CD8-positive, alpha-beta T cell (primary cell): ENCODE measurements at regions of chr7 and their contacts with region 1.

Region 1: GRCh38 chr7:127347567-127348246 is 44.8 kb downstream of the ZNF800 start:
- DNase-seq: peak; percentile 45 to 88 (median 71)
- ATAC-seq: peak; percentile 98
- H3K4me3 ChIP-seq: peak overlapping the region; percentile 26 to 34
- H3K4me3 Mint-ChIP-seq: peak overlapping the region; percentile 72
- H3K27ac ChIP-seq: no peak overlapping the region
- H3K27ac Mint-ChIP-seq: no peak overlapping the region
- H3K4me1 ChIP-seq: peaks cover 3% of the 10 kb centered on the region
- H3K4me1 Mint-ChIP-seq: peaks cover 22% of the 10 kb centered on the region
- H3K27me3 ChIP-seq: no peaks in the 10 kb centered on the region
- H3K27me3 Mint-ChIP-seq: no peaks in the 10 kb centered on the region
- CTCF ChIP-seq: peak; percentile 43

Region 2: DNA sequence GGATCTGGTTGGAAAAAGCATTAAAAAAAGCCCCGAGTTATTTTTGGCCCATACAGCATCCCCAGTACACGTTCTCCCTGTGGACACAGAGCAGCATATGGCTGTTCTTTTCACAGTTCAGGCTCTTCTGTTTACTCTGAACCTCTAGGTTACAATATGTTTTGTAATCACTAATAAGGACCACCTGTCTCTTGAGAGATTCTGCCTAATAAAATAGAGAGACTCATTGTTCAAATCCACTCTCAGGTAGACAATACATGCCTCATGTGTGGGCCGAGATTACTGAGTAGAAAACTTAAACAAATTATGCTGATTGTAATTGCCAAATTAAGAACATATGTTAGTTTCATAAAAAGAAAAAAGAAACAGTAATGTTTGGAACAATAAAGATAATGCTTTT is 742.7 kb before region 1 on chr7:
- CTCF ChIA-PET with region 1: no interaction called
- POLR2A ChIA-PET with region 1: no interaction called
- intact Hi-C with region 1: no loop called
- DNase-seq: no peak
- ATAC-seq: no peak
- H3K4me3 ChIP-seq: no peak overlapping the region
- H3K4me3 Mint-ChIP-seq: no peak overlapping the region
- H3K27ac ChIP-seq: no peak overlapping the region
- H3K27ac Mint-ChIP-seq: no peak overlapping the region
- H3K4me1 ChIP-seq: no peaks in the 10 kb centered on the region
- H3K4me1 Mint-ChIP-seq: no peaks in the 10 kb centered on the region
- H3K27me3 ChIP-seq: no peaks in the 10 kb centered on the region
- H3K27me3 Mint-ChIP-seq: no peaks in the 10 kb centered on the region
- CTCF ChIP-seq: no peak

Region 3: GRCh38 chr7:127359011-127359410 is 11.3 kb after region 1 on chr7:
- CTCF ChIA-PET with region 1: interaction called, 9 read pairs
- POLR2A ChIA-PET with region 1: interaction called, 3 read pairs
- intact Hi-C with region 1: loop called in 1 of 2 experiments (anchors 2 kb)
- DNase-seq: no peak
- ATAC-seq: no peak
- H3K4me3 ChIP-seq: no peak overlapping the region
- H3K4me3 Mint-ChIP-seq: no peak overlapping the region
- H3K27ac ChIP-seq: no peak overlapping the region
- H3K27ac Mint-ChIP-seq: peak overlapping the region; percentile 47
- H3K4me1 ChIP-seq: no peaks in the 10 kb centered on the region
- H3K4me1 Mint-ChIP-seq: peaks cover 21% of the 10 kb centered on the region
- H3K27me3 ChIP-seq: no peaks in the 10 kb centered on the region
- H3K27me3 Mint-ChIP-seq: no peaks in the 10 kb centered on the region
- CTCF ChIP-seq: no peak

Region 4: GRCh38 chr7:127404286-127405072 is 56.8 kb after region 1 on chr7:
- CTCF ChIA-PET with region 1: interaction called, 5 read pairs
- POLR2A ChIA-PET with region 1: no interaction called
- intact Hi-C with region 1: loop called in 1 of 2 experiments (anchors 5 kb)
- DNase-seq: peak in 2 of 9 experiments; percentile 15 to 56
- ATAC-seq: peak; percentile 77
- H3K4me3 ChIP-seq: no peak overlapping the region
- H3K4me3 Mint-ChIP-seq: peak overlapping the region; percentile 20
- H3K27ac ChIP-seq: peak overlapping the region; percentile 3 to 21
- H3K27ac Mint-ChIP-seq: peak overlapping the region; percentile 84
- H3K4me1 ChIP-seq: peaks cover 28% of the 10 kb centered on the region
- H3K4me1 Mint-ChIP-seq: peaks cover 30% of the 10 kb centered on the region
- H3K27me3 ChIP-seq: no peaks in the 10 kb centered on the region
- H3K27me3 Mint-ChIP-seq: no peaks in the 10 kb centered on the region
- CTCF ChIP-seq: no peak

Region 5: GRCh38 chr7:127514499-127514898 is 166.8 kb after region 1 on chr7:
- CTCF ChIA-PET with region 1: interaction called, 21 read pairs
- POLR2A ChIA-PET with region 1: interaction called, 3 read pairs
- intact Hi-C with region 1: loop called in 1 of 2 experiments (anchors 1 kb)
- DNase-seq: peak in 3 of 9 experiments; percentile 5 to 70 (median 55)
- ATAC-seq: peak; percentile 57
- H3K4me3 ChIP-seq: no peak overlapping the region
- H3K4me3 Mint-ChIP-seq: no peak overlapping the region
- H3K27ac ChIP-seq: no peak overlapping the region
- H3K27ac Mint-ChIP-seq: no peak overlapping the region
- H3K4me1 ChIP-seq: no peaks in the 10 kb centered on the region
- H3K4me1 Mint-ChIP-seq: no peaks in the 10 kb centered on the region
- H3K27me3 ChIP-seq: no peaks in the 10 kb centered on the region
- H3K27me3 Mint-ChIP-seq: peaks cover 17% of the 10 kb centered on the region
- CTCF ChIP-seq: peak; percentile 62